Heart left ventricle (tissue), 16 donors: ENCODE measurements at regions of chr9 and their contacts with region 1.

Region 1: GRCh38 chr9:125472926-125473701 is 211.5 kb downstream of the GAPVD1 start:
- DNase-seq: peak in 4 of 5 donors; percentile 41 to 61 (median 48)
- ATAC-seq: peak; percentile 58 to 91 (median 85)
- H3K4me3 ChIP-seq: peak overlapping the region in 2 of 12 donors; percentile 11 to 20
- H3K27ac ChIP-seq: peak overlapping the region; percentile 5 to 85 (median 68)
- H3K4me1 ChIP-seq: peaks cover 0 to 56% (median 22%) of the 10 kb centered on the region in 12 donors
- H3K27me3 ChIP-seq: no peaks in the 10 kb centered on the region
- CTCF ChIP-seq: peak in 1 of 12 donors; percentile 17
- POLR2A ChIP-seq: no peak

Region 2: GRCh38 chr9:125428060-125428901 is 44.8 kb before region 1 on chr9:
- intact Hi-C with region 1: loop called in 2 of 10 experiments (anchors 5 to 10 kb)
- DNase-seq: peak in 2 of 5 donors; percentile 33 to 50
- ATAC-seq: peak in 3 of 4 donors; percentile 40 to 74 (median 64)
- H3K4me3 ChIP-seq: no peak overlapping the region
- H3K27ac ChIP-seq: no peak overlapping the region
- H3K4me1 ChIP-seq: no peaks in the 10 kb centered on the region
- H3K27me3 ChIP-seq: no peaks in the 10 kb centered on the region
- CTCF ChIP-seq: peak; percentile 28 to 57 (median 40)
- POLR2A ChIP-seq: no peak

Region 3: GRCh38 chr9:125521462-125522327 is 48.6 kb after region 1 on chr9:
- intact Hi-C with region 1: loop called in 1 of 10 experiments (anchors 10 kb)
- DNase-seq: no peak
- ATAC-seq: no peak
- H3K4me3 ChIP-seq: no peak overlapping the region
- H3K27ac ChIP-seq: peak overlapping the region in 3 of 12 donors; percentile 24 to 78 (median 59)
- H3K4me1 ChIP-seq: peaks cover 0 to 50% (median 14%) of the 10 kb centered on the region in 12 donors
- H3K27me3 ChIP-seq: no peaks in the 10 kb centered on the region
- CTCF ChIP-seq: no peak
- POLR2A ChIP-seq: no peak

Region 4: DNA sequence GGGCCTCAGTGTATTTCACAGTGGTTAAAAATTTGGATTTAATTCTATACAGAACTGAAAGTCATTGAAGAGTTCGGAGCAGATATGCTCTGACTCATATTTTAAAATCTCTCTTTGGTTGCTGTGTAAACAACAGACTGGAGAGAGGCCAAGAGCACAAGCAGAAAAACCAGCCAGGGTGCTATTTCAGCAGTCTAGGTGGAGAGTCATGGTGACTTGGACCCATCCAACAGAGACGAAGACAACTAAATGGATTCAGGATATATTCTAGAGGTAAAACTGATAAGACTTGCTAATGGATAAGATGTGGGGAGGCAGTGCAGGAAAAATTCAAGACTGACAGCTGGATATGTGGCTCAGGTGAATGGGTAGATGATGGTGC is 65.0 kb after region 1 on chr9:
- intact Hi-C with region 1: loop called in 1 of 10 experiments (anchors 5 kb)
- DNase-seq: peak in 1 of 5 donors; percentile 47
- ATAC-seq: peak; percentile 55 to 81 (median 60)
- H3K4me3 ChIP-seq: no peak overlapping the region
- H3K27ac ChIP-seq: peak overlapping the region in 9 of 12 donors; percentile 9 to 64 (median 33)
- H3K4me1 ChIP-seq: peaks cover 0 to 68% (median 26%) of the 10 kb centered on the region in 12 donors
- H3K27me3 ChIP-seq: no peaks in the 10 kb centered on the region
- CTCF ChIP-seq: no peak
- POLR2A ChIP-seq: no peak

Region 5: GRCh38 chr9:125544988-125545651 is 72.0 kb after region 1 on chr9:
- intact Hi-C with region 1: loop called in 3 of 10 experiments (anchors 5 kb)
- DNase-seq: no peak
- ATAC-seq: peak; percentile 36 to 62 (median 58)
- H3K4me3 ChIP-seq: no peak overlapping the region
- H3K27ac ChIP-seq: peak overlapping the region in 11 of 12 donors; percentile 22 to 71 (median 59)
- H3K4me1 ChIP-seq: peaks cover 0 to 63% (median 33%) of the 10 kb centered on the region in 12 donors
- H3K27me3 ChIP-seq: no peaks in the 10 kb centered on the region
- CTCF ChIP-seq: no peak
- POLR2A ChIP-seq: no peak

Region 6: GRCh38 chr9:125549891-125550885 is 77.1 kb after region 1 on chr9:
- intact Hi-C with region 1: loop called in 3 of 10 experiments (anchors 5 kb)
- DNase-seq: no peak
- ATAC-seq: peak; percentile 30 to 67 (median 58)
- H3K4me3 ChIP-seq: peak overlapping the region in 5 of 12 donors; percentile 5 to 34 (median 19)
- H3K27ac ChIP-seq: peak overlapping the region; percentile 32 to 93 (median 74)
- H3K4me1 ChIP-seq: peaks cover 0 to 56% (median 38%) of the 10 kb centered on the region in 12 donors
- H3K27me3 ChIP-seq: no peaks in the 10 kb centered on the region
- CTCF ChIP-seq: no peak
- POLR2A ChIP-seq: no peak